ENCODE measurements at regions of chr2 and their contacts with region 1.

Region 1: DNA sequence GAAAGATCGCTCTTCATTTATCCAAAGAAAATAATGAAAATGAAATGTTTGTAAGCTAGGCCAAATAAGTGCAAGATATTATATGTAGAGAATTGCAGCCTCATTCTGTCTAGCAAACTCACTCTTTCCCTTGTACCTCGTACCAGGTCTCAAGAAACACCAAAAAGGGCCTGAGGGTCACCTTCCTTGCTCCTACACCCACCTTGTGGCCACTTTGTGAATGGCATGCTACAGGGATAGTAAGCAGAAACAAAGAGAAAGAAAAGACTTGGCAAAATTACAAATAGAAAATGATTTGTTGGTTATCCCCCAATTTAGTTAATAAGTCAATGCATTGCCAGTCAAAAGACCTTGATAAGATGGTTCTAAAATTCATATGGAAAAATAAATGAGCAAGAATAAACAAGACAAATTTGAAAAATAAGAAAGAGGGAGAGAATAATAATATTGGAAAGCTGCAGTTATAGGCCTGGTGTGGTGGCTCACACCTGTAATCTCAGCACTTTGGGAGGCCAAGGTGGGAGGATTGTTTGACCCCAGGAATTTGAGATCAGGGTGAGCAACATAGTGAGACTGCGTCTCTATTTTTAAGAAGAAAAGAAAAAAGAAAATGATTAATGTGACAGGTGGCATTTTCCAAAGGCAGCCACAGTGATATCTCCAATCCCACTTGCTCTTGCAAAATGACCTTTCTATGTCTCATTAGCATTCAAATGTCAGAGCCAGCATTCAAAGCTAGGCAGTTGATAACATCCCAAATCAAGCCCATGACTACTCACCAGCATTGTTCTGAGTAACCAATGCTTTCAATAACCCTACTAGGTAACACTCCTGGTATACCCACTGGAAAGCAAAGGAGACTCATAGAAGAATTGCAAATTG is 38.8 kb upstream of the BMP10 start:
- DNase-seq: peak; percentile 70 to 84
- ATAC-seq: peak; percentile 80
- H3K4me3 ChIP-seq: no peak overlapping the region
- H3K27ac ChIP-seq: no peak overlapping the region
- H3K4me1 ChIP-seq: peaks cover 0 to 6% of the 10 kb centered on the region in 2 donors
- H3K27me3 ChIP-seq: no peaks in the 10 kb centered on the region

Region 2: DNA sequence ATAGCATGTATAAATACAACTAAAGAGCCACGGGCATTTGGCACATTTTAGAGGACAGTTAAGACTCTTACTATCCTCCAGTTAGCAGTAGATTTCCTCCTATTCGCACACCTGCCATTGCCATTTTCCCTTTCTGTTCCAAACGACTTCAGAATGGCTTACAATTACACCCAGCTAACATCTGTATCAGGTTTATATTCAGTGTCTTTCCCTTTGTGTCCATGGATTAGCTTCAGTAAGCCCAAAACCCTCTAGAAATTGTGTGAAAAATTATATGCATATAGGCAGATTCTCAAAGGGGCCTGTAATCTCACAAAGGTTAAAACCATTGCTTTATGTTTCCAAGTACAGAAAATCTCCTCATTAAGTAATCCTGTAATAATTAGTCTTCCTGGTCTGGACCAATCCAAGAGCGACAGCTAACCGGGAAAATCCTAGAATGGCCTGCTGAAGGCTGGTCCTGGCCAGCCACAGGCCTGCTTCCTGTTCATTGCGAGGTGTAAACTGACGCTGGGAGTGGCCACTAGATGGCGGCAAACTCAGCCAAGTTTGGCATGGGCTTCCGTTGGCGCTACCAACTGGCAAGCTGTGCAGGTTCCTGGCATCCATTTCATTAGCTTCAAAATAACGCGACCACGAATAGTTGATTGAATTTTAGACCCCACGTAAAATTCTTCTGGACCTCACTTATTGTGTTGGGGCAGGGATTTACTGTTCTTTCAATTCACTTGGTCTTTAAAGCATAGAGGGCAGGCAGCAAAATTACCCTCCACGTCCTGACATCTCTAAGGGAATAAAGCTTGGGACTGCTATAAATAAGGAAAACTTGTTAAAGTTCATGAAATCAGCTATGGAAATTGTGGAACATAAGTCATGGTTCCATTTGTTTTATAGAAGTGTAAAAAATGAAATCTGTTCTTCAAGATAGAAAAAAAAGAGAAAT is 158.4 kb before region 1 on chr2:
- intact Hi-C with region 1: loop called (anchors 1 to 5 kb)
- DNase-seq: peak; percentile 95 to 97
- ATAC-seq: peak; percentile 93
- H3K4me3 ChIP-seq: no peak overlapping the region
- H3K27ac ChIP-seq: no peak overlapping the region
- H3K4me1 ChIP-seq: no peaks in the 10 kb centered on the region
- H3K27me3 ChIP-seq: no peaks in the 10 kb centered on the region

Region 3: DNA sequence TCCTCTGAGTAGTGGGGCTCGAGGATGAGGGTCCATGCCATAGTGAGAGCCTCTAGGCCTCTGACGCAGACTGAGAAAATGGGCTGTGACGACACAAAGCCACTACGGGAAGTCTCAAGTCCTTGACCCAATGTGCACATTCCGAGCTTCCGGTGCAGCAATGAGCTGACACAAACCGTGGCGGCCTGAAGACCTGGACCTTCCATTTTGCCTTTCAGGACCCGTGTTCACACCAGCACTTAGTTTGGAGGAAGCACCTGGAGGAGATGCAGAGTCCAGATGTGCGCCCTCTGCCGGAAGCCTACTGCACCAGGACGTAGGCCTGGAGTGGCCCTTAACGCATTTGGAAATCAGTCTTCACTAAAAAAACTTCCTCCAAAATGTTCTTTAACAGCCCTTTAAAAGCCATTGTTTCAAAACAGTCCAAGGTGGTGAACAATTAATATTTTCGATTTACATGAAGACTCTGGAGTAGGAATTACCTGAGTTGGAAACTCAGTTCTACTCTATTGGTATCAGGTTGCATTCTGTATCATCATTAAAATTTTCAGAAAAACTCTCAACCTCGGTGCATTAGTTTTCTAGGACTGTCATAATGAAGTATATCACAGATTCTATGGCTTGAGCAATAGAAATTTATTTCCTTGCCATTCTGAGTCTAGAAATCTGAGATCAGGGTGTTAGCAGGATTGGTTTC is 72.7 kb before region 1 on chr2:
- intact Hi-C with region 1: loop called (anchors 5 kb)
- DNase-seq: peak; percentile 81 to 89
- ATAC-seq: peak; percentile 69
- H3K4me3 ChIP-seq: no peak overlapping the region
- H3K27ac ChIP-seq: no peak overlapping the region
- H3K4me1 ChIP-seq: no peaks in the 10 kb centered on the region
- H3K27me3 ChIP-seq: no peaks in the 10 kb centered on the region

Region 4: GRCh38 chr2:68870215-68870614 is 39.8 kb before region 1 on chr2:
- intact Hi-C with region 1: no loop called
- DNase-seq: no peak
- ATAC-seq: no peak
- H3K4me3 ChIP-seq: no peak overlapping the region
- H3K27ac ChIP-seq: no peak overlapping the region
- H3K4me1 ChIP-seq: no peaks in the 10 kb centered on the region
- H3K27me3 ChIP-seq: no peaks in the 10 kb centered on the region

Region 5: DNA sequence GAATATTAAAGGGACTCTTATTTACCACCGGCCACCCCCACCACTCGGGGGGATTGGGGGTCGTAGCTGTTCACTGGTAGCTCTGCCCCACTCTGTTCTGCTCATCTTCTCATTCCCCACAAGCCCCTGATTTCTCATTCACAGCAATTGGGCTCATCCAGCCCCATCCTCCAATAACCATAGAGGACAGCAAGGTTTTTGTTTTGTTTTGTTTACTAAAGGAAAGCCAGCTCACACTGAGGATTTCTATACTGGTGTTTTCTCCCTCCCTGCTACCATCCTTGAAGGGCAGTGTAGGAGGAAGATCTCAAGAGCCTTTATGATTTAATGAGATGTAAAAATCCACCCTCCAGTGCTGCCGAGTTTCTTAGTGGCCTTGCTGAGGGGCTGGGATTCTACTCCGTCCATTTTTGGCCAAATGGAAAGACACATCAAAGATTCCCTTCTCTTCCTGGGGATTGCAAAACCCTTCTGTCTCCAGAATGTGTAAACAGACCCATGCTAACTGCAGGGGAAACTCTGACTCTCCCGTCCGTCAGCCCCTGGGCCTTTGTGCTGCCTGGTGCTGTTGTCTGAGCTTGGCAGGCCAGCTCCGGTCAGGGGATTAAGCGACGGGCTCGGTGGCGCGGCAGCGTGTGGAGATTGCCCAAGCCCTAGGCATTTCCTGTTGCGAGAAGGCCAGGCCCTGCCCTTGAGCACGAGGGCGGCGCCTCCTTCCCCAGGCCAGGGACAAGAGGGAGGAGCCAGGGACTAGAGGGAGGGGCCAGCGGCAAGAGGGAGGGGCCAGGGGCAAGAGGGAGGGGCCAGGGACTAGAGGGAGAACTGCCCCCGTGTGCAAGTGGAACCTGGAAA is 268.0 kb after region 1 on chr2:
- intact Hi-C with region 1: no loop called
- DNase-seq: peak; percentile 97 to 98
- ATAC-seq: peak; percentile 95
- H3K4me3 ChIP-seq: no peak overlapping the region
- H3K27ac ChIP-seq: peak overlapping the region; percentile 85 to 86
- H3K4me1 ChIP-seq: peaks cover 2 to 6% of the 10 kb centered on the region in 2 donors
- H3K27me3 ChIP-seq: no peaks in the 10 kb centered on the region

Measured in aorta (tissue), 5 donors.